ENCODE measurements at regions of chr7 and their contacts with region 1.

Region 1: DNA sequence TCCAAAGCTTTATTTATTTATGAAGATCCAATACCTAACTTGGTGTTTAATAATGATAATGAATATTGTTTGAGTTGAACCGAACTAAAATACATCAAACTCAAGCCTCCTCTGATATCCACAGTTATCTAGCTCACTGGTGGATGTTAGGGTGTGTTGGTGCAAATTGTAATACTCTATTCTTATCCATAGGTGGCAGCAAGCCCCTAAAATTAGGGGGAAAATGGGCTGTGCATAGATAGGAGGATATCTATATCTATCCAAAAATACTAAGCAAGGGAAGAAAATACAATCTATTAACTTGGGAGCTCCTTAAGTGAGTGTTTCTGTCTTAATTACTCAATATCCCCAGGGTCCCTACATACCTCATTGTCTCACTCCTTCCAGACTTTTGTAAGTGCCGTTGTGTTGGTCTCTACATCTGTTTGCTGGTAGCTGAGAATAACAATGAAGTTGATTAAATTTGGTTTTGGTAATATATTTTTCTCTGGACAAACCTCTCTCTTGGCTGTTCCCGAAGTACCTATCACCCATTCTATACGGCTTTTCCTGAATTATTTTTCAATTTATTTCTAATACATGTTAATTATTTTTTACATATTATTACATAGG is 55.0 kb upstream of the VWDE start:
- DNase-seq: no peak
- ATAC-seq: peak; percentile 95
- H3K4me3 ChIP-seq: no peak overlapping the region
- H3K27ac ChIP-seq: no peak overlapping the region
- H3K4me1 ChIP-seq: no peaks in the 10 kb centered on the region
- H3K27me3 ChIP-seq: no peaks in the 10 kb centered on the region
- CTCF ChIP-seq: peak; percentile 59 to 73 (median 66)
- EP300 ChIP-seq: no peak
- POLR2A ChIP-seq: no peak
- RAD21 ChIP-seq: peak; percentile 77

Region 2: GRCh38 chr7:12436896-12437535 is 21.6 kb before region 1 on chr7:
- CTCF ChIA-PET with region 1: interaction called, 32 read pairs
- POLR2A ChIA-PET with region 1: no interaction called
- RAD21 ChIA-PET with region 1: interaction called, 6 read pairs
- SMC1A ChIA-PET with region 1: interaction called, 4 read pairs
- in situ Hi-C with region 1: no loop called
- intact Hi-C with region 1: no loop called
- DNase-seq: no peak
- ATAC-seq: peak; percentile 55; the same call in 1 of the 3 replicates
- H3K4me3 ChIP-seq: no peak overlapping the region
- H3K27ac ChIP-seq: no peak overlapping the region
- H3K4me1 ChIP-seq: no peaks in the 10 kb centered on the region
- H3K27me3 ChIP-seq: no peaks in the 10 kb centered on the region
- CTCF ChIP-seq: peak in 2 of 3 experiments; percentile 9 to 25; a peak in 2 of 6 replicates
- EP300 ChIP-seq: no peak
- POLR2A ChIP-seq: no peak
- RAD21 ChIP-seq: no peak

Region 3: GRCh38 chr7:12444785-12445184 is 13.8 kb before region 1 on chr7:
- CTCF ChIA-PET with region 1: interaction called, 16 read pairs
- POLR2A ChIA-PET with region 1: no interaction called
- RAD21 ChIA-PET with region 1: no interaction called
- SMC1A ChIA-PET with region 1: interaction called, 6 read pairs
- in situ Hi-C with region 1: no loop called
- intact Hi-C with region 1: no loop called
- DNase-seq: no peak
- ATAC-seq: no peak
- H3K4me3 ChIP-seq: no peak overlapping the region
- H3K27ac ChIP-seq: no peak overlapping the region
- H3K4me1 ChIP-seq: no peaks in the 10 kb centered on the region
- H3K27me3 ChIP-seq: no peaks in the 10 kb centered on the region
- CTCF ChIP-seq: no peak
- EP300 ChIP-seq: no peak
- POLR2A ChIP-seq: no peak
- RAD21 ChIP-seq: no peak

Region 4: GRCh38 chr7:12469568-12469967 is 10.9 kb after region 1 on chr7:
- CTCF ChIA-PET with region 1: interaction called, 47 read pairs
- POLR2A ChIA-PET with region 1: interaction called, 3 read pairs
- RAD21 ChIA-PET with region 1: interaction called, 6 read pairs
- SMC1A ChIA-PET with region 1: interaction called, 10 read pairs
- in situ Hi-C with region 1: no loop called
- intact Hi-C with region 1: no loop called
- DNase-seq: no peak
- ATAC-seq: no peak
- H3K4me3 ChIP-seq: no peak overlapping the region; the same call in 1 of the 2 replicates
- H3K27ac ChIP-seq: no peak overlapping the region
- H3K4me1 ChIP-seq: no peaks in the 10 kb centered on the region
- H3K27me3 ChIP-seq: no peaks in the 10 kb centered on the region
- CTCF ChIP-seq: no peak
- EP300 ChIP-seq: no peak
- POLR2A ChIP-seq: no peak
- RAD21 ChIP-seq: no peak

Region 5: DNA sequence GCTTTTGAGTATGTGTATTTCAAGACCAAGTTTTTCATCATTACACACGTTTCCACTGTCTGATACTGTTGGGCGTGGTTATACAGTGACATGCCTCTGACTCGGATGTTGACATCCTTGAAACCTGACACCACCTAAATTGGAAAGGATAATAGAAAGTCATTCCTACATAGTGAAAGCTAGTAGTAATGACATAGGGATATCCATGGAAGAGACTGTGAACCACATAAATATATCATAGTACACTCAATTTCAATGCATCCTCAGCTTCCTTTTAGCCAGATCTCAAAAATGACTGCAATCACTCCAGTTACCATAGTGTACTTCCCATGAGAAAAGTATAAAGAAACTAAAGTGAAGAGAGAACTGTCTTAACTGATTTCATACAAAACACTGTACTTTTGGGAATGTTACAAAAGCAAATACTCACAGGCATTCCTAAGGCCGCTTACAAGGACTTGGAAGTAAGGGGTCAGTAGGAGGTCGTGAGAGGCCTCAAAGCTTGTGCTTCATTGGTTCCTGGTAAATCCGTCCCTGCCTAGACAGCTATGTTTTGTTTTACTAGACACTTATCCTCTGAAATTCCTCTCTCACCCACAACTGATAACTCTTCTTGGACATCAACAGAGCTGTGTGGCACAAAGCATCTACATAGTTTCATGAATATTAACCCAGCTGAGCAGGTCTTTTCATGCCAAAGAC is 16.9 kb after region 1 on chr7:
- CTCF ChIA-PET with region 1: interaction called, 47 read pairs
- POLR2A ChIA-PET with region 1: interaction called, 3 read pairs
- RAD21 ChIA-PET with region 1: interaction called, 6 read pairs
- SMC1A ChIA-PET with region 1: interaction called, 10 read pairs
- in situ Hi-C with region 1: no loop called
- intact Hi-C with region 1: no loop called
- DNase-seq: no peak
- ATAC-seq: no peak
- H3K4me3 ChIP-seq: no peak overlapping the region
- H3K27ac ChIP-seq: no peak overlapping the region
- H3K4me1 ChIP-seq: no peaks in the 10 kb centered on the region
- H3K27me3 ChIP-seq: no peaks in the 10 kb centered on the region
- CTCF ChIP-seq: no peak
- EP300 ChIP-seq: no peak
- POLR2A ChIP-seq: no peak
- RAD21 ChIP-seq: no peak

Region 6: DNA sequence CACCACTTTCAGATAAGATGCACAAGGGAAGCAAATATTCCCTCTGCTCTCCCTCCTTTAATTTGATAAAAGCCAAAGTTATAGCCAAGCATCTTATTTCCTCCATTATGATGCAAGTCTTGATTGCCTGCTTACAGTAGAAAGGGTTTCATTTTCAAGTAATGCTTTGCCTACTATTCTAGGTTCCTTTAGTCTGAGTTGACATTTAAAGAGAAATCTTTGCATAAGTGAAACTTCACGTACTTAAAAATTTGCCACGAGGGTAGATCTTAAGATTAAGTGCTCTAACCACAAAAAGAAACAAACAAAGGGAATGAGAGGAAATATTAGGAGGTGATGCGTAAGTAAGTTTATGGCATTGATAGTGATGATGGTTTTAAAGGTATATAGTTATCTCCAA is 23.1 kb after region 1 on chr7:
- CTCF ChIA-PET with region 1: interaction called, 33 read pairs
- POLR2A ChIA-PET with region 1: no interaction called
- RAD21 ChIA-PET with region 1: interaction called, 12 read pairs
- SMC1A ChIA-PET with region 1: interaction called, 4 read pairs
- in situ Hi-C with region 1: no loop called
- intact Hi-C with region 1: no loop called
- DNase-seq: no peak
- ATAC-seq: peak; percentile 58
- H3K4me3 ChIP-seq: 0 out of 2 replicates have a peak overlapping the region, but pooled peaks have one; percentile 5
- H3K27ac ChIP-seq: no peak overlapping the region
- H3K4me1 ChIP-seq: no peaks in the 10 kb centered on the region
- H3K27me3 ChIP-seq: no peaks in the 10 kb centered on the region
- CTCF ChIP-seq: no peak
- EP300 ChIP-seq: no peak
- POLR2A ChIP-seq: no peak
- RAD21 ChIP-seq: no peak

Region 7: DNA sequence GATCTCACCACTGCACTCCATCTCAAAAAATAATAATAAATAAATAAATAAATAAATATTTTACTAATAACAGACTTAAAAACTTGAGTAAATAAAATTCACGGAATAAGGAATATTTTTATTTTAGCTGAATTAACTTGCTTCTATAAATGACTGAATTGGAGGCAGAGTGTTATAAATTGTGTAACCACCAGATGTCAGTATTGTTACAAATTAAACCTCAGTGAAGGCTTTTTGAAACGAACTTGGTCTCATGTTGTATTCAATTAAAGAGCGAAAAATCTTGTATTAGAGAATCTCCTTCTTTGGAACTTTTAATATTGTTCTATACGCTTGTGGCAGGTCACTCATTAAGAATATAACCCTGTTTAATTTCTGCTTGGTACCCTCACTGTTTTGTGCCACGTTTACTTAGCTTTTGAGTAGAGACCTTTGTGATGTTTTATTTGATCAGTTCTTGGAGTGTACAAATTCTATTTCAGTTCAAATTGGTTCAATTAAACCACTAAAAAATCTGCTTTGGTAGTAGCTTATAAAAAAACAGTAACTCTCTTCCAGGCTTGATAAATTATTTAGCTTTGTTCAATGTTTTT is 66.3 kb after region 1 on chr7:
- CTCF ChIA-PET with region 1: interaction called, 15 read pairs
- POLR2A ChIA-PET with region 1: no interaction called
- RAD21 ChIA-PET with region 1: interaction called, 3 read pairs
- SMC1A ChIA-PET with region 1: interaction called, 3 read pairs
- in situ Hi-C with region 1: no loop called
- intact Hi-C with region 1: no loop called
- DNase-seq: peak; percentile 2
- ATAC-seq: peak; percentile 58
- H3K4me3 ChIP-seq: no peak overlapping the region
- H3K27ac ChIP-seq: no peak overlapping the region
- H3K4me1 ChIP-seq: no peaks in the 10 kb centered on the region
- H3K27me3 ChIP-seq: no peaks in the 10 kb centered on the region
- CTCF ChIP-seq: peak; percentile 29 to 60 (median 46); a peak in 5 of 6 replicates
- EP300 ChIP-seq: no peak
- POLR2A ChIP-seq: no peak
- RAD21 ChIP-seq: peak; percentile 80